Ascending aorta (tissue), 2 donors: ENCODE measurements at regions of chr10 and their contacts with region 1.

Region 1: GRCh38 chr10:30974773-30975415 is 56.8 kb downstream of the ZNF438 start:
- DNase-seq: no peak
- H3K4me3 ChIP-seq: no peak overlapping the region
- H3K27ac ChIP-seq: peak overlapping the region; percentile 54 to 70
- H3K4me1 ChIP-seq: peaks cover 4 to 30% of the 10 kb centered on the region in 2 donors
- H3K27me3 ChIP-seq: no peaks in the 10 kb centered on the region
- CTCF ChIP-seq: no peak

Region 2: GRCh38 chr10:31011017-31011659 is 36.2 kb after region 1 on chr10:
- intact Hi-C with region 1: loop called (anchors 5 kb)
- DNase-seq: no peak
- H3K4me3 ChIP-seq: no peak overlapping the region
- H3K27ac ChIP-seq: peak overlapping the region; percentile 31 to 44
- H3K4me1 ChIP-seq: peaks cover 0 to 16% of the 10 kb centered on the region in 2 donors
- H3K27me3 ChIP-seq: no peaks in the 10 kb centered on the region
- CTCF ChIP-seq: no peak